ENCODE measurements at regions of chr10 and their contacts with region 1.

Region 1: DNA sequence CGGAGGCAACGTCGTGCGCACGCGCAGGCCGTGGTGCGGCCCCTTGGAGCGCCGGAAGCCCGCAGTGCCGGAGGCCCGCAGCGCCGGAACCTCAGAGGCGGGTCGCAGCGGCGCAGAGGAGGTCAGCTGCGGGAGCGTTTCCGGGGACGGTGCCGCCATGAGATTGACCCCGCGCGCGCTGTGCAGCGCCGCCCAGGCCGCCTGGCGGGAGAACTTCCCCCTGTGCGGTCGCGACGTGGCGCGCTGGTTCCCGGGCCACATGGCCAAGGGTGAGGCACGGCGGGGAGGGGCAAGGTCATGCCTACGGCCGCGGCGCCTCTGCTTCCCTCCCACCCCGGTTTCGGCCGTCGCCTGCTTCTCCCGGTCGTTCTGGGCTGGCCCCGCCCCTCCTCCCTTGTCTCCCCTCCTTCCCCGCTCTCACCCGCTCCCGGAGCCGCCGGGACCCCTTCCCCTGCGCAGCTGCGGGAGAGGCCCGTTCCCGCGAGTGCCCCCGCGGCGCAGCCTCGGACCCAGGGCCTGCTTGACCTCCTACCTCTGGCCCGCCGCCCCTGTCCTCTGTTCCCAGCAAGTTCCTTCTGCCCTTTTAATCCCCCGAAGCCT is at the start of gene MTG1:
- DNase-seq: peak; percentile 58 to 95
- H3K4me3 ChIP-seq: peak within 1 kb of the TSS; percentile 85 to 97
- H3K27ac ChIP-seq: peak within 1 kb of the TSS; percentile 68 to 82
- H3K4me1 ChIP-seq: peaks cover 0 to 14% of the 10 kb centered on the region in 2 donors
- H3K27me3 ChIP-seq: no peaks in the 10 kb centered on the region
- CTCF ChIP-seq: peak in 2 of 3 experiments; percentile 22 to 30
- total RNA-seq, gene MTG1: 37.8 TPM

Region 2: GRCh38 chr10:131792011-131792651 is 1602.0 kb before region 1 on chr10:
- intact Hi-C with region 1: no loop called
- DNase-seq: peak in 1 of 2 donors; percentile 52
- H3K4me3 ChIP-seq: no peak overlapping the region
- H3K27ac ChIP-seq: no peak overlapping the region
- H3K4me1 ChIP-seq: no peaks in the 10 kb centered on the region
- H3K27me3 ChIP-seq: no peaks in the 10 kb centered on the region
- CTCF ChIP-seq: no peak

Region 3: DNA sequence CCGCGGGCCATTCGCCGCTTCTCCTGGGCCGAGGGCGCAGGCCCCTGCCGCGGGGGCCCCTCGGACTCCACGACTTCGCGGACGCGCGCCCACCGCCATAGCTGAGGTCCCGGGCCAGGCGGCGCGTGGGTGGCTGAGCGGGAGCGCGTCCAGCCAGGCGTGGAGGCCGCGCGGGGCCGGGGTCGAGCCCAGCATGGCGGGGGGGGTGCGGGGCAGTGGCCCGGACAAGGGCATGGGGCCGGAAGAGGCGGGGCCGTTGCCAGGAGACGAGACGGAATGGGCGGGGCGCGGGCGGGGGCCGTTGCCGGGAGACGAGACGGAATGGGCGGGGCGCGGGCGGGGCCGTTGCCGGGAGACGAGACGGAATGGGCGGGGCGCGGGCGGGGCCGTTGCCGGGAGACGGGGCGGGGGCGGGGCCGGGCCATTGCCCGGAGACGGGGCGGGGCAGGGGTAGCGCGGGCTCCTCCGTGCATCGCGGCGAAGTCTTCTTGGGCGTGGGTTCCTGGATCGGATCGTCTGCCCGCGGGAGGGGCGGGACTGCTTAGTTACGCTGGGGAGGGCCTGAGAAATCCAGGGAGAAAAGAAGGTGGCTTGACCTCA is 132.3 kb before region 1 on chr10:
- intact Hi-C with region 1: loop called (anchors 5 kb)
- DNase-seq: peak in 1 of 2 donors; percentile 90
- H3K4me3 ChIP-seq: peak overlapping the region; percentile 75 to 89
- H3K27ac ChIP-seq: peak overlapping the region; percentile 80 to 85
- H3K4me1 ChIP-seq: peaks cover 14 to 18% of the 10 kb centered on the region in 2 donors
- H3K27me3 ChIP-seq: no peaks in the 10 kb centered on the region
- CTCF ChIP-seq: no peak

Region 4: GRCh38 chr10:133347710-133348517 is 46.2 kb before region 1 on chr10:
- intact Hi-C with region 1: no loop called
- DNase-seq: no peak
- H3K4me3 ChIP-seq: no peak overlapping the region
- H3K27ac ChIP-seq: no peak overlapping the region
- H3K4me1 ChIP-seq: no peaks in the 10 kb centered on the region
- H3K27me3 ChIP-seq: no peaks in the 10 kb centered on the region
- CTCF ChIP-seq: no peak